Calu3 (cell line): ENCODE measurements at regions of chr4 and their contacts with region 1.

Region 1: GRCh38 chr4:70839589-70840093 is at the start of gene GRSF1:
- DNase-seq: peak; percentile 93
- H3K4me3 Mint-ChIP-seq: peak within 1 kb of the TSS; percentile 93
- H3K27ac Mint-ChIP-seq: peak within 1 kb of the TSS; percentile 74
- H3K4me1 Mint-ChIP-seq: peaks cover 9% of the 10 kb centered on the region
- H3K27me3 Mint-ChIP-seq: no peaks in the 10 kb centered on the region
- CTCF ChIP-seq: no peak
- total RNA-seq, gene GRSF1: 63.0 and 68.7 TPM in 2 replicates

Region 2: GRCh38 chr4:70110917-70111316 is 728.7 kb before region 1 on chr4:
- CTCF ChIA-PET with region 1: no interaction called
- intact Hi-C with region 1: no loop called
- DNase-seq: no peak
- H3K4me3 Mint-ChIP-seq: no peak overlapping the region
- H3K27ac Mint-ChIP-seq: no peak overlapping the region
- H3K4me1 Mint-ChIP-seq: no peaks in the 10 kb centered on the region
- H3K27me3 Mint-ChIP-seq: no peaks in the 10 kb centered on the region
- CTCF ChIP-seq: no peak

Region 3: GRCh38 chr4:70704331-70705145 is 135.1 kb before region 1 on chr4:
- CTCF ChIA-PET with region 1: no interaction called
- intact Hi-C with region 1: loop called (anchors 10 kb)
- DNase-seq: peak; percentile 76
- H3K4me3 Mint-ChIP-seq: peak overlapping the region; percentile 93
- H3K27ac Mint-ChIP-seq: peak overlapping the region; percentile 87
- H3K4me1 Mint-ChIP-seq: no peaks in the 10 kb centered on the region
- H3K27me3 Mint-ChIP-seq: no peaks in the 10 kb centered on the region
- CTCF ChIP-seq: peak; percentile 23

Region 4: DNA sequence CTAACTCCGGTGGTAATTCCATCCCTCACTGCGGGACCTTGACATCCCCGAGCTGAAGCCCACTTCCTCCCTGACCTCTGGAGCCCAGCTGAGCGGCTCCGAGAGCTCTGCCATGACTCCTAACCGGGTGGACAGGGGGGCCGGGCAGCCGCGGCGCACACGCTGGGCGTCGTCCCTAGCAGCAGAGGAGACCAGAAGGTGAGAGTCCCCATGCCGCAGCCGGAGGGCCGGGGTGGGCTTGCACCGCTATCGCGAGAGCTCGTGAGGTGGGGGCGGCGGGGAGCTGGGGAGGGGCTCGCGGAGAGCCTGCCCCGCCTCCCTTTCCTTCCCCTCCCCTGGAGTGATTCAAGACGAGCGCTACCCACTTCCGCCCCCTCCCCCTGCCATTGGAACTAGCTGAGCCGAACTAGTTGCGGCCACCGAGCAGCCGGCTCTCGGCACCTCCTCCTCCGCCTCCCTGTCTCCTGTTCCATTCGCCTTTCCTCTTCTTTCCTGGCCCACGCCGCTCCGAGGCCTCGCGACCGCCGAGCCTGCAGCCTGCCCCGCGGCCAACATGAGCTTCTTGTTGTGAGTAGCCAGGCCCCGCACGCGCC is 62.4 kb after region 1 on chr4 and contains the start of gene MOB1B:
- CTCF ChIA-PET with region 1: interaction called, 11 read pairs
- intact Hi-C with region 1: no loop called
- DNase-seq: peak; percentile 83
- H3K4me3 Mint-ChIP-seq: peak within 1 kb of the TSS; percentile 93
- H3K27ac Mint-ChIP-seq: peak within 1 kb of the TSS; percentile 64
- H3K4me1 Mint-ChIP-seq: no peaks in the 10 kb centered on the region
- H3K27me3 Mint-ChIP-seq: no peaks in the 10 kb centered on the region
- CTCF ChIP-seq: no peak
- total RNA-seq, gene MOB1B: 13.3 and 13.4 TPM in 2 replicates